ENCODE measurements at regions of chr20 and their contacts with region 1.

Region 1: DNA sequence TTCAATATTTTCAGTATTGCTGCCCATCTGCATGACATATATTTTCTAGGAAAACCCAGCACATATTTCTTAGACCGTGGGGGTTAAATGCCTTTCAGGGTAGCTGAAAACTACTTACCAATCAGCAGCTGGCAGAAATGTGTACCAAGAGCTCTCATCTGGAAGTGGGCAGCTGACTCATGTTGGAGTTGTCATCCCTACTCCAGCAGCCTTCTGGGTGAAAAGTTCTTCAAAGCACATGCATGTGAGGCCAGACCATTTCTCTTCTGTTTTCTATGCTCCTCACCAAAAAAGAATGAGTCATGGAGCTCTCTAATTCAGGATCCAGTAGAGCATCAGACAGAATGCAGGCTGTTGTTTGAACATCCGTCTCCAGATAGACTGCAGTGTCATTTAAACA is 135.5 kb downstream of the PAX1 start:
- DNase-seq: no peak
- ATAC-seq: no peak
- H3K4me3 Mint-ChIP-seq: no peak overlapping the region
- H3K27ac Mint-ChIP-seq: no peak overlapping the region
- H3K4me1 Mint-ChIP-seq: no peaks in the 10 kb centered on the region
- H3K27me3 Mint-ChIP-seq: no peaks in the 10 kb centered on the region

Region 2: GRCh38 chr20:21781446-21782075 is 59.4 kb before region 1 on chr20:
- CTCF ChIA-PET with region 1: no interaction called
- POLR2A ChIA-PET with region 1: no interaction called
- intact Hi-C with region 1: loop called in 1 of 2 experiments (anchors 10 kb)
- DNase-seq: no peak
- ATAC-seq: no peak
- H3K4me3 Mint-ChIP-seq: no peak overlapping the region
- H3K27ac Mint-ChIP-seq: no peak overlapping the region
- H3K4me1 Mint-ChIP-seq: no peaks in the 10 kb centered on the region
- H3K27me3 Mint-ChIP-seq: no peaks in the 10 kb centered on the region